Natural killer cell (primary cell): ENCODE measurements at regions of chr16 and their contacts with region 1.

Region 1: DNA sequence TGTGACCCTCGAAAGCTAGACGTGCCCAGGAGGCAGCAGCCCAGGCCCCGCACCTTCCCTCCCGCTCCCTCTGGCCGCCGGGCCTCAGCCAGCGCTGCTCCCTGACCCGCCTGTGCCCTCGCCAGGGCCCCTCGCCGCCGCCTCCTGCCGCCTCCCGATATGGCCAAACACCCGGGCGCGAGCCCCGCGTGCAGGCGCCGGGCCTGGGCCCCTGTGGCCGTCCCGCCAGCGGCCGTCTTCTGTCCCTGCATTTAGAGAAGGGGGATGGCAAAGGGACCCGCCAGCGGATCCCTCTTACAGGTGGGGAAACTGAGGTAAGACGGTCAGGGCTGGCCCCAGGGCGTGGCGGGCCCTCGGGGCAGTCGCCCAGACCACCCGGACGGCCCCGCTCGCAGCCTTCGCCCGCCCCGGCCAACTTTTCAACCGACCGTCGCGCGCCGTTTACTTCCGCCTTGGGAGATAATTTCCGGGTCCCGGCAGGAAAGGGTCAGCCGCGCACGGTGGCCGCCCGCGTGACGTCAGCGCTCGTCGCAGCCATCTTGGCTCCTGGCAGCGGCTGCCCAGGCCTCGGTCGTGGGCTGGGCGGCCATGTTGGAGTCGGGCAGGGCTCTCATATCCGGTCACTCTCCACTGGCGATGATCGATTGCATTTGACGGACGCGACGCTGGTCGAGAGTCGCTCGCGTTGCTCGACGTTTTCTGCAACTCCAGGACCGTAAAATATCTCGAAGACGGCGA is 7.0 kb upstream of the GNG13 start:
- DNase-seq: peak; percentile 84 to 91
- ATAC-seq: peak; percentile 93 to 98 (median 96)
- H3K4me3 ChIP-seq: peak overlapping the region; percentile 79
- H3K4me3 Mint-ChIP-seq: peak overlapping the region; percentile 96
- H3K27ac ChIP-seq: peak overlapping the region; percentile 86
- H3K27ac Mint-ChIP-seq: peak overlapping the region; percentile 92 to 96
- H3K4me1 ChIP-seq: peaks cover 21% of the 10 kb centered on the region
- H3K4me1 Mint-ChIP-seq: peaks cover 11 to 12% of the 10 kb centered on the region in 2 donors
- H3K27me3 ChIP-seq: peaks cover 2% of the 10 kb centered on the region
- H3K27me3 Mint-ChIP-seq: peaks cover 7% of the 10 kb centered on the region in 2 donors
- CTCF ChIP-seq: no peak

Region 2: GRCh38 chr16:788394-789126 is 19.0 kb before region 1 on chr16 and contains the start of gene CHTF18:
- intact Hi-C with region 1: loop called (anchors 1 kb)
- DNase-seq: peak; percentile 95 to 96
- ATAC-seq: peak; percentile 96 to 98 (median 97)
- H3K4me3 ChIP-seq: peak within 1 kb of the TSS; percentile 84
- H3K4me3 Mint-ChIP-seq: peak within 1 kb of the TSS; percentile 86
- H3K27ac ChIP-seq: peak within 1 kb of the TSS; percentile 30
- H3K27ac Mint-ChIP-seq: peak within 1 kb of the TSS; percentile 38 to 71
- H3K4me1 ChIP-seq: peaks cover 29% of the 10 kb centered on the region
- H3K4me1 Mint-ChIP-seq: peaks cover 0 to 9% of the 10 kb centered on the region in 2 donors
- H3K27me3 ChIP-seq: no peaks in the 10 kb centered on the region
- H3K27me3 Mint-ChIP-seq: no peaks in the 10 kb centered on the region
- CTCF ChIP-seq: no peak
- total RNA-seq, gene CHTF18: 26.7 to 52.4 (median 40.5) TPM